SK-N-SH (cell line): ENCODE measurements at regions of chr5 and their contacts with region 1.

Region 1: DNA sequence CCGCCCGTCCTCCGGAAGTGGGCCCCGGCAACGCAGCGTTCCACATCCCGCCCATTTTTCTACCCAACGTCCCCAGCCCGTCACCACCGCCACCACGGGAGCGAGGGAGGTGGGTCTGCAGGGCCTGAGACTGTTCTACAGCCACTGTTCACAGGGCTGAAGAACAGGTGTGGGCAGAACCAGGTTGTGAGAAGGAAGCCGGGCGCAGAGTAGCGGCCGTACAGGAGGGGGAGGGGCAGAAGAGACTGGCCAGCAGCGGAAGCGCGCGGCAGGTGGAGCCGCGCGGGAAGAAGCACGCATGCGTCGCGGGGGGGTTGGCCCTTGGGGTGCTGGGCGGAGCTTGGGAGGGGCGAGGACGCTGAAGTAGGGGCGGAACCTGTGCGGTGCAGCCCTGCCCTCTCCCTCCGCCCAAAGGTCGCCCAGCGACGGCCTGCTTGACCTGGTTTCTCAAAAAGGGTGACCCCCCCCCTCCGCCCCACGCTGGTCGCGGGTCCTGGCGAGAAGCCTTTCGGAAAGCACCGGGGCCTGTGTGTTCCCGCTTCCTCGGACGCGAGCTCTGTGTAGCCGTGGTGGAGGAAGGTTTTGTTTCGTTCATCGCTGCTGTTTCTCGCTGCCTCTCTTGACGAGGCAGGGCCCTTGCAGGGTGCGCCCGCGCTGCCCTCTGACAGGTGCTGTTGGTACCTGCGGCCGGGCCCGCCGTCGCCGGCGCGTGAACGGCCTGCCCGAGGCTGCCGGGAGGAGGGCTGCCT is 7.8 kb upstream of the MGAT1 start:
- DNase-seq: peak; percentile 98
- H3K4me3 ChIP-seq: peak overlapping the region; percentile 79 to 81
- H3K27ac ChIP-seq: peak overlapping the region; percentile 91 to 100
- H3K4me1 ChIP-seq: peaks cover 4 to 39% of the 10 kb centered on the region in 2 experiments; a peak in 3 of 4 replicates
- H3K27me3 ChIP-seq: no peaks in the 10 kb centered on the region
- CTCF ChIP-seq: no peak
- EP300 ChIP-seq: no peak; a peak in 1 of 4 replicates
- RAD21 ChIP-seq: no peak

Region 2: DNA sequence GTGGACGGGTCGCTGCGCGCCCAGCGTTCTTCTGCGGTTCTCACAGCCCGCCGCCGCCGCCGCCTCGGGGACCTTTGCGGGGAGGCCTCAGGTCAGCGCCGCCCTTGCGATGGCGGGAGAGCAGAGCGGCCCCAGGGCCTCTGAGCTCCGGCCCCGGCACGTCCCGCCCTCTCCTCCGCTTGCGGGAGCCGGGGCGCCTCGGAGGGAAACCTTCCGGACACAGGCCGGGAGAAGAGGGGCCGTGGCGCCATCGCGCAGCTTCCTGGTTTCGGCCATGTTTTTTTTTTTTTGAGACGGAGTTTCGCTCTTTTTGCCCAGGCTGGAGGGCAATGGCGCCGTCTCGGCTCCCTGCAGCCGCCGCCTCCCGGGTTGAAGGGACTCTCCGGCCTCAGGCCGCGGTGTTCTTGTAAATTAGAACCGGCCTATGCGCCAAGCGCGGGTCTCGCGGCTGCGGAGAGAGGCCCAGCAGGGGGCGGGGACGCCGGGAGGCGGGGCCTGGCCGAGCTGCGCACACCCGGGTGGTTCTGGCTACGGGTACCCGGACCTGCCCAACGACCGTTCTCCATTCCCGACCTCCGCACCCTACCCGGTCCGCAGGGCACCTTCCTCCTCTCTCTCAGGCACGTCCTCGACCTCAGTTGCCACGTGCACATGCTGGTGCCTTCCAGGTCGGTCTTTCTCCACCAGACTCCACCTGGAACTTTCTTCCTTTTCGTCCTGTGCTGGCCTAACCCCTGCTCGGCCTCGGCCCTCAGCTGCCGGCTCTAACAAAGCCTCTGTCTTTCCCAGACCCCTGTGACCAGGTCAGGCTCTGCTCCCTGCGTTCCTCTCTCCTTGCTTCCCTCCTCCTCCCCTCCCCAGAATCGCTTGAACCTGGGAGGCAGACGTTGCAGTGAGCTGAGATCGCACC is 21.0 kb after region 1 on chr5:
- CTCF ChIA-PET with region 1: interaction called, 4 read pairs
- POLR2A ChIA-PET with region 1: interaction called, 10 read pairs
- DNase-seq: peak; percentile 95
- H3K4me3 ChIP-seq: peak overlapping the region; percentile 78 to 87
- H3K27ac ChIP-seq: peak overlapping the region; percentile 70 to 88
- H3K4me1 ChIP-seq: peaks cover 0 to 18% of the 10 kb centered on the region in 2 experiments; a peak in 1 of 4 replicates
- H3K27me3 ChIP-seq: no peaks in the 10 kb centered on the region
- CTCF ChIP-seq: no peak
- EP300 ChIP-seq: 0 out of 4 replicates have a peak, but pooled peaks of 1 of the 2 experiments have one; percentile 7
- RAD21 ChIP-seq: no peak